Transverse colon (tissue), 4 donors: ENCODE measurements at regions of chr4 and their contacts with region 1.

Region 1: GRCh38 chr4:9762823-9763475 is 18.5 kb upstream of the DRD5 start:
- DNase-seq: peak; percentile 63
- H3K4me3 ChIP-seq: no peak overlapping the region
- H3K27ac ChIP-seq: no peak overlapping the region
- H3K4me1 ChIP-seq: no peaks in the 10 kb centered on the region
- H3K27me3 ChIP-seq: peaks cover 6% of the 10 kb centered on the region
- CTCF ChIP-seq: peak; percentile 51 to 77 (median 65)
- EP300 ChIP-seq: no peak
- POLR2A ChIP-seq: no peak

Region 2: GRCh38 chr4:9745771-9746170 is 17.2 kb before region 1 on chr4:
- in situ Hi-C with region 1: no loop called
- intact Hi-C with region 1: no loop called
- DNase-seq: no peak
- H3K4me3 ChIP-seq: no peak overlapping the region
- H3K27ac ChIP-seq: no peak overlapping the region
- H3K4me1 ChIP-seq: no peaks in the 10 kb centered on the region
- H3K27me3 ChIP-seq: no peaks in the 10 kb centered on the region
- CTCF ChIP-seq: no peak
- EP300 ChIP-seq: no peak
- POLR2A ChIP-seq: no peak

Region 3: DNA sequence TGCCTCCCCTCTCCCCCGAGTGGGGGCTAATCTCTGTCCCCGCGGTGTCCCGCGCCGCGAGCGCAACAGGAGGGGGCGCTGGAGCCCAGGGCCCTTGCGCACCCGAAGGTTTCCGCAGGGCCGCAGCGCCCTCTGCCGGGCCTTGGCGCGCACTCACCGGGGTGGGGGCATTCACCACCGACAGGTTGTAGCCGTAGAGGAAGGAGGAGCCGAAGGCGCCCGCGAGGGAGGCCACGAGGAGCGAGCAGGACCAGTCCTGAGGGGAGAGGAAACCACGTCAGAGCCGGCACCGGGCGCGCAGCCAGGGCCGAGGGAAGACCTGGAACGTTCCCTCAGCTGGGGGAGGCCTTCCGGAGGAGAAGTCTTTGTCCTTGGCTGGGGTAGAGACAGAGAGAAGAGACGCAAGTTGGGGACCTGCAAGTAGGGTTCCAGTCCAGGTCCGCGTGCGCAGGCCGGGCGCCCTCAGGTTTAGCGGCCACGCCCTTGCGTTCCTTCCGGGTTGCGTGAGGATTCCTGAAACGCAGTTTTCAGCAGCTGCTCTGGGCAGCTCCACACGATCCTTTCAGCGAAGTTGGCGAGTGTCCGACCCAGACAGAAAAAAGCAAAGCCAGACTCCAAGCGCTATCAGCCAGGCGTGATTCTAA is 256.0 kb after region 1 on chr4:
- in situ Hi-C with region 1: loop called (anchors 5 to 10 kb)
- intact Hi-C with region 1: no loop called
- DNase-seq: peak; percentile 97
- H3K4me3 ChIP-seq: peak overlapping the region in 3 of 4 donors; percentile 29 to 55 (median 31)
- H3K27ac ChIP-seq: peak overlapping the region; percentile 84 to 90 (median 88)
- H3K4me1 ChIP-seq: peaks cover 5 to 33% (median 12%) of the 10 kb centered on the region in 4 donors
- H3K27me3 ChIP-seq: no peaks in the 10 kb centered on the region
- CTCF ChIP-seq: peak; percentile 95 to 100 (median 99)
- EP300 ChIP-seq: no peak
- POLR2A ChIP-seq: peak; percentile 75

Region 4: GRCh38 chr4:10403633-10404445 is 640.9 kb after region 1 on chr4:
- in situ Hi-C with region 1: loop called in 1 of 4 experiments (anchors 25 kb)
- intact Hi-C with region 1: no loop called
- DNase-seq: peak; percentile 11
- H3K4me3 ChIP-seq: no peak overlapping the region
- H3K27ac ChIP-seq: no peak overlapping the region
- H3K4me1 ChIP-seq: no peaks in the 10 kb centered on the region
- H3K27me3 ChIP-seq: no peaks in the 10 kb centered on the region
- CTCF ChIP-seq: peak; percentile 42 to 70 (median 53)
- EP300 ChIP-seq: no peak
- POLR2A ChIP-seq: no peak

Region 5: GRCh38 chr4:10530137-10530786 is 767.3 kb after region 1 on chr4:
- in situ Hi-C with region 1: loop called in 1 of 4 experiments (anchors 25 kb)
- intact Hi-C with region 1: no loop called
- DNase-seq: no peak
- H3K4me3 ChIP-seq: no peak overlapping the region
- H3K27ac ChIP-seq: no peak overlapping the region
- H3K4me1 ChIP-seq: peaks cover 0 to 19% (median 0%) of the 10 kb centered on the region in 4 donors
- H3K27me3 ChIP-seq: no peaks in the 10 kb centered on the region
- CTCF ChIP-seq: no peak
- EP300 ChIP-seq: no peak
- POLR2A ChIP-seq: no peak